ENCODE measurements at regions of chr11 and their contacts with region 1.

Region 1: GRCh38 chr11:113162592-113162962 is 151.8 kb upstream of the TTC12 start:
- DNase-seq: no peak
- ATAC-seq: no peak
- H3K4me3 ChIP-seq: no peak overlapping the region
- H3K27ac ChIP-seq: peak overlapping the region in 1 of 4 donors; percentile 44
- H3K4me1 ChIP-seq: peaks cover 10% of the 10 kb centered on the region
- H3K27me3 ChIP-seq: no peaks in the 10 kb centered on the region
- CTCF ChIP-seq: no peak
- POLR2A ChIP-seq: no peak

Region 2: GRCh38 chr11:113213549-113213948 is 51.0 kb after region 1 on chr11:
- intact Hi-C with region 1: loop called (anchors 10 kb)
- DNase-seq: peak in 1 of 4 donors; percentile 24
- ATAC-seq: no peak
- H3K4me3 ChIP-seq: no peak overlapping the region
- H3K27ac ChIP-seq: no peak overlapping the region
- H3K4me1 ChIP-seq: no peaks in the 10 kb centered on the region
- H3K27me3 ChIP-seq: no peaks in the 10 kb centered on the region
- CTCF ChIP-seq: no peak
- POLR2A ChIP-seq: no peak

Measured in body of pancreas (tissue), 4 donors.